Aorta (tissue), 5 donors: ENCODE measurements at regions of chr5 and their contacts with region 1.

Region 1: DNA sequence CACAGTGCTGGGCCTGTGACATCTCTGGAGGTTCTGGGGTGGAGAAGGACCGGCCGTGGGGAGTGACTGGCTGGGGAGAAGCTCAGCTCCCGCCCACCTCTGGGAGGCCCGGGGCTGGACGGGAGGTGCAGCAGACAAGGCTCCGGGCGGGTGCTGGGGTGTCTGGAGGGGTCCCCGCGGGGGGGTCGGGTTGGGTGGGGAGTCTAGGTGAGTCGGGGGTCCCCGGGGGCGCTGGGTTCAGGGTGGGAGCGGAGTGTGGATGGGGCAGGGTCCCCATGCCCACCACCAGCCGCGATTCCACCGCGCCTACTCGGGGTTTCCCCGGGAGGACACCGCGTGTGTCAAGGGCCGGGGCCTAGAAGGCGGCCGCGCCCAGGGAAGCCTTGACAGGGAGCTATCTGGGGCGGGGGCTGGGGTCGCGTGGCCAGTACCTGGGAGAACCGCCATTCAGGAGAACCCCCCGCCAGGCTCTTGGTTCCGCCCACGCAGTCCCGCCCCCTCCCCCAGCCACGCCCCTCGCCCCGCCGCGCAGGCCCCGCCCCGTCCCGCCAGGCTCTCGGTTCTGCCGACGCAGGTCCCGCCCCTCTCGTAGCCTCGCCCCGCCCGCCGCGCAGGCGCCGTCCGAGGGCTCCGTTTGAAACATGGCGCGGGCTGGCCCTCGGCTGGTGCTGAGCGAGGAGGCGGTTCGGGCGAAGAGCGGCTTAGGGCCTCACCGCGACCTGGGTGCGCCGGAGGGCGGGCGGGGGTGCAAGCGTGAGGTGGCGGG is at the start of gene CEP72:
- DNase-seq: peak; percentile 94 to 98
- ATAC-seq: peak; percentile 96
- H3K4me3 ChIP-seq: peak within 1 kb of the TSS; percentile 71 to 93
- H3K27ac ChIP-seq: no peak within 1 kb of the TSS
- H3K4me1 ChIP-seq: no peaks in the 10 kb centered on the region
- H3K27me3 ChIP-seq: no peaks in the 10 kb centered on the region
- total RNA-seq, gene CEP72: 2.2 to 6.5 TPM

Region 2: DNA sequence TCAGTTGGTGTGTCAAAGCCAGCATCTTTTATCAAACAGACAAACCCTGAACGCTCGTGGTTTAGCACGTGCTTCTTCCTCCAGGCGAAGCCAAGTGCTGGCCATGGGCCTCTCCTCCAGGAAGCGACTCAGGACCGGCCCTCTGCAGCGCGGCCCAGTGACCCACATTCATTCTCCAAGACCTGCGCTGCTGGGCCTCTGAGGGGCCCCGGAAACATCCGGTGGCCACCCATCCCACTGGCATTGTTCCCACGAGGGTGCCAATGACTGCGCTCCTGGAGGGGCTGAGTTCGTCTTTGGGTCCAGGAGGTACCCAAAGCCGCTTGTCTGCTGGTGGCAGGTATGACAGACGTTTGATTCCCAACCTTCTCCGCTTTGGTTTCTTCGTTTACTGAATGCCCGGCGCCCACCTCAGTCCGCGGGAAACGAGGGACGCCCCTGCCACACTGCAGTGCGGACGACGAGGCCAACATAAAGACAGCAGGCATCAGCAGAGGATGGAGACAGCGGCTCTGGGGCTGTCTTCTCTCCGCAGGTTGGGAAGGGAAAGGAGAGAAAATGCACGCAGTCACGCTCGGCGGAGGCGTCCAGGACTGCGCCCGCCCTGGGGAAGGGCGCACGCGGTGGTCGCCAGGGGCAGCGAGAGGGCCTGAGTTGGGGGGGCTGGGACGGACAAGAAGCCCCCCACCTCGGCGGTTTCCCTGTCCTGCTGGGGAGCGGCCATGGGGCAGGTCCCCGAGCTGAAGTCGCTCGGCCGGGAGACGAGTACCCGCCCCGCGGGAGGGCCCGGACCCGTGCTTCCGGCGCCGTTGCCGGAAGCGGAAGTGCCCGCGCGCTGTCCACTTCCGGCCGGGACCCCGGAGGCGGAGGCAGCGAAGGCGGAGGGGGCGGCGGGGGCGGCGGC is 169.3 kb before region 1 on chr5 and contains the start of gene EXOC3:
- intact Hi-C with region 1: loop called in 1 of 2 experiments (anchors 10 kb)
- DNase-seq: peak; percentile 82 to 92
- ATAC-seq: peak; percentile 92
- H3K4me3 ChIP-seq: peak within 1 kb of the TSS; percentile 59 to 71
- H3K27ac ChIP-seq: peak within 1 kb of the TSS in 1 of 2 donors; percentile 19
- H3K4me1 ChIP-seq: no peaks in the 10 kb centered on the region
- H3K27me3 ChIP-seq: no peaks in the 10 kb centered on the region
- total RNA-seq, gene EXOC3: 54.6 to 65.2 TPM

Region 3: DNA sequence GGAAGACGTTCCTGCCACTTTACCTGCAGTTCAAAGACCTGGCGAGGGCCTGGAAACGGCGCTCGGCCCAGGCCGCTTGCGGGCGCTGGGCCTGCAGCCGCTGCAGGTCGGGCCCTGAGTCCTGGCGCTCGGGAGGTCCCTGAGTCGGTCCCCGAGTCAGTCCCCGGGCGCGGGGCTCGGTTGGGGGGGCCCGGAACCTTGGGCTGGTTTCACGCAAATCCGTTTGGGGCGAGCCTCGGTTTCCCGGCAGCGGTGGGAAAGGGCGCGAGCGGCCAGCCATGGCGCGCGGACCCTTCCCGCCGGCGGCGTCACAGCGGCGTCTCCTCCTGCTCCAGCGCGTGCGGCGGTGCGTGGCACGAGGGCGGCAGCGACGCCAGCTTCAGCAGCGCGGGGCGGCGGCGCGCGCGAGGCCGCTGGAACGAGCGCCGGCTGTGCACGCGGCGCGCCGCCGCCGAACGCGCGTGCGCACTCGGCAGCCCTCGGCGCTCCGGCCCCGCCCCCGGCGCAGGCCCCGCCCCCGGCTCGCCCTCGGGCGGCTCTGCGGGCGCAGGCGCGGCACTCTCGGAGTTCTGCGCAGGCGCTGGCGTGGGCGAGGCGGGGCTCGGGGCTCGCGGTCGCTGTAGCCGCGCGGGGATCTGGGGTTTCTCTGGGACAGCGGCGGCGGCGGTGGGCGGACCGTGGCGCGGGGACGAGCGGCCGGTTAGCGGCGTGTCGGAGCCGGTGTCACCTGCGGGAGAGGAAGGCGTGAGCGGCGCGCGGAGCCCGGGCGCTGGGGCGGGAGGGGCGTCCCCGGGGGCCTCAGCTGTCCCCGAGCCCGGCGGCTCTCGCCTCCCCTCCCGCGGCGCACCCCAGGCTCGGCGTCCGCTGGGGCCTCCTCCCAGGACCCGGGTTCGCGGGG is 139.0 kb before region 1 on chr5:
- intact Hi-C with region 1: loop called in 1 of 2 experiments (anchors 10 kb)
- DNase-seq: peak; percentile 91 to 97
- ATAC-seq: peak; percentile 89
- H3K4me3 ChIP-seq: peak overlapping the region; percentile 71 to 82
- H3K27ac ChIP-seq: no peak overlapping the region
- H3K4me1 ChIP-seq: no peaks in the 10 kb centered on the region
- H3K27me3 ChIP-seq: no peaks in the 10 kb centered on the region

Region 4: GRCh38 chr5:633501-633955 is 21.6 kb after region 1 on chr5:
- intact Hi-C with region 1: no loop called
- DNase-seq: peak in 1 of 2 donors; percentile 68
- ATAC-seq: no peak
- H3K4me3 ChIP-seq: no peak overlapping the region
- H3K27ac ChIP-seq: no peak overlapping the region
- H3K4me1 ChIP-seq: no peaks in the 10 kb centered on the region
- H3K27me3 ChIP-seq: no peaks in the 10 kb centered on the region

Region 5: DNA sequence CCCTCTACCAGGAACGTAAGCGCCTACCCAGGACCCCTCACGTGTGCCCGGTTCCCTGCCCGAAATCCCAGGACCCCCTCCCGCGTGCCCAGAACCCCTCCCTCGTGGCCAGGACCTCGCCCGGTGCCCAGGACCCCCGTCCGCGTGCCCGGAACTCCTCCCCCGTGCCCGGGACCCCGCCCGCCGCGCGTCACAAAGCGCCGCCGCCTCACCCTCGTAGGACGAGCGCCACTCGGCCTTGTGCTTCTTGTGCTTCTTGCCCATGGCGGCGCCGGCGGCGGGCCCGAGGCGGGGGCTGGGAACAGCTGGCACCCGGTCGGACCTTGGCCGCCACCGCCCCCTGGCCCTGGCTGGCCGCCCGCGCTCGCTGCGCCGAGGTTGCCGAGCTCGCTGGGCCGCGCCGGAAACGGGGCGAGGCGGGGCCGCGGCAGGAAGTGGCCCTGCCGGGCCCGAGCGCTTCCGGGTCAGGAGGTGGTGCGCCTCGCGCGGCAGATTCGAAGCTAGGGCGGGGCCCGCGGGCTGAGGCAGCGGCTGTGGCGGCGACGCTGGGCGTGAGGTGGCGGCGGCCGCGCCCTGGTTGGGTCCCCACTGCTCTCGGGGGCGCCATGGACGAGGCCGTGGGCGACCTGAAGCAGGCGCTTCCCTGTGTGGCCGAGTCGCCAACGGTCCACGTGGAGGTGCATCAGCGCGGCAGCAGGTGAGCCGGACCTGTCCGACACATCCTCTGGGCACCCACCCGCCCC is 280.7 kb after region 1 on chr5 and contains the starts of genes BRD9 and TRIP13:
- intact Hi-C with region 1: loop called in 1 of 2 experiments (anchors 5 kb)
- DNase-seq: peak; percentile 89 to 95
- ATAC-seq: peak; percentile 94
- H3K4me3 ChIP-seq: peak within 1 kb of the TSS; percentile 55 to 63
- H3K27ac ChIP-seq: peak within 1 kb of the TSS; percentile 41 to 43
- H3K4me1 ChIP-seq: no peaks in the 10 kb centered on the region
- H3K27me3 ChIP-seq: no peaks in the 10 kb centered on the region
- total RNA-seq, gene BRD9: 38.2 to 39.7 TPM
- total RNA-seq, gene TRIP13: 0.84 to 1.3 TPM